ENCODE measurements at regions of chr11 and their contacts with region 1.

Region 1: DNA sequence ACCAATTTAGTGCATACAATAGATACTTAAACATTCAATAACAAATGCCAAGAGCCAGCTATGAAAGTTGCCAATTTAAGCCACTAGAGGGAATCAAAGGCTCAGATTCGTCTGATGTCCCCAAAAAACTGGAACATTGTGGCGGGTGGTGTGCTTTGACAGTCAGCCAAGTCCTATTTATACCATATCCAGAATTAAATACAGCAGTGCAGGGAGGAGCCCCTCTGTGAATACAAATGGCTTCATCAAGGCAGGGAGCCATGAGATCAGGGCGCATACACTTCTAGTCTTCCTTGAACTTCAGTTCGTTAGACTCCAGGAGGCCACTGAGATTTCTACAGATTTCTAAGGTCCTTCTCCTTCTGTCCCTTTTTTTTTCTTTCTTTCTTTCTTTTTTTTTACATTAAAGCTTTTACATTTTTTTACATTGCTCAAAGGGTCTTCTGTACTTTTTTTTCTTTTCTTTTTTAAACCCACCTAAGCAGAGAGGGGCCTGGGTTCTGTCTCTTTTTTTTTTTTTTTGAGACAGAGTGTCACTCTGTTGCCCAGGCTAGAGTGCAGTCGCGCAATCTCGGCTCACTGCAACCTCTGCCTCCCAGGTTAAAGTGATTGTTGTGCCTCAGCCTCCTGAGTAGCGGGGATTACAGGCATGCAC is 41.5 kb upstream of the HSPA8 start:
- DNase-seq: no peak
- CTCF ChIP-seq: peak; percentile 44

Region 2: DNA sequence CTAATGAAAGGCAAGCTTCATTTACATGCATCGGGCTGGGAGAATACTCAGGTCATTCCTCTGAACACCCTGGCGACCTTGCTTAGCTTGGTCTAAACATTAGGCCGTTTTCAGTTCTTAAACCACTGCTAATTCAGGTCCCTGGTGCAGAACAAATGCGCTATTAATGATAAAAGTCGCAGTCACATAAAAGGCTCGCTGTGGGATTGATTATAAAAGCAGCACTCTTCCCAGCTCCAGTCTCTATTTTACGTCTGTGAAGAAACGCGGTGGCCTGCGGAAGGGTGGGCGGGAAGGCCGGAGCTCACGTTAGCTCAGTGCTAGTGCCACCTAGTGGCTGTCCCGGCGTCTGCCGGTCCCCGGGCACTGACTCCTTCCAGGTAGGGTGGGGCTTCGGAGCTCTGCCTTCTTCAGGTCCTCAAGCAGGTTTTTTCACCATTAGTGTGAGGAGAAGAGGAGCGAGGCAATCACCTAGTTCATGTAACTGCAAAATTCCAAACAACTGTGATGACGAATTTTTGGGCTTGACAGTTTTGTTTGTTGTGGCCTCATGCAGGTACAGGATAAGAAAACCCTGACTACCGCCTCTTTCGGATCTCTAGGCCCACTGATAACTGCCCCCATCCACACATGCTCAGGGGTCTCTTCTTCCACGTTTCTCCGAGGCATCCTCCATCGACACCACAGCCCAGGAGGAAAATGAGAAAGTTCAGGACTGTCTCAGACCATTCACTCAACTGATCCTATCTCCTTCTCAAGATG is 158.1 kb after region 1 on chr11:
- CTCF ChIA-PET with region 1: interaction called, 10 read pairs
- POLR2A ChIA-PET with region 1: no interaction called
- DNase-seq: peak; percentile 76
- CTCF ChIP-seq: peak; percentile 89